A549 (cell line): ENCODE measurements at regions of chr14 and their contacts with region 1.

Region 1: GRCh38 chr14:104852280-104852663 is 12.8 kb upstream of the CEP170B start:
- DNase-seq: no peak
- ATAC-seq: peak in 1 of 2 experiments; percentile 25; a peak in 3 of 6 replicates
- H3K4me3 ChIP-seq: no peak overlapping the region
- H3K27ac ChIP-seq: no peak overlapping the region
- H3K4me1 ChIP-seq: no peaks in the 10 kb centered on the region
- CTCF ChIP-seq: no peak
- EP300 ChIP-seq: no peak
- POLR2A ChIP-seq: no peak
- RAD21 ChIP-seq: no peak

Region 2: DNA sequence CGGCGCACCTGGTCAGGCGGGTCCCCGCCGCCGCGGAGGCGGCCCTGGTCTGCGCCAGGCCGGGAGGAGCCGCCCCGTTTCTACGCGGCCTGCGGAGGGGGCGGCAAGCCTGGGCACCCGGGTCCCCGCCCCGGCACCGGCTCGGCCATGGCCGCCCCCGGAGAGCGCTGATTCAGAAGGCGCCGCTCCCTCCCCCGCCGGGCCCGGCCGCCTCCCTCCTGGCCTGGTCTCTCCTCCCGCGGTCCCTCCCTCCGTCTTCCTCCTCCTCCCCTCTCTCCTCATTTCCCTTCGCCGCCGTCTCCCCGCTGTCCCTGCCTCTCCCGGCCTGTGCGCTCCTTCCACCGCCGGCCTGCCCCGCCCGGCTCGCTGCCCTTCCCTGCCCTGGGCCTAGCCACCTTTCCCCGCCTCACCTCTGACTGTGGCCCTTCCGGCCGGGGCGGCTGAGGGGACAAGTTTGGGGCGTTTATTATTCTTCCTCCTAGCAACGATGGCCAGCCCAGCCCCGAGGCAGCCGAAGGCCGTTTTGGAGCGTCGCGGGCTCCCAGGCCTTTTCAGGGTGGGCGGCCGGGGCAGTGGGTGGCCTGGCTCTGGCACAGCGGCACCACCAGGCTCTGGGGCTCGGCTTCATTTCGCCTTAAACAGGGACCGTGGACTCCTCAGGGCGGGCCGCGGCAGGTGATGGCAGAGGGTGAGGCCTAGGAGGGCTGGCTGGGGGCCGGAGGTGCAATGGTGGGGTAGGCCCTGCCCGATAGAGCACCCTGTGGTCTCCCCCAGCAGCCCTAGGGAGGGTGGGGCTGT is 13.6 kb after region 1 on chr14:
- CTCF ChIA-PET with region 1: interaction called, 10 read pairs
- POLR2A ChIA-PET with region 1: interaction called, 3 read pairs
- DNase-seq: peak; percentile 41 to 58
- ATAC-seq: peak; percentile 61 to 78
- H3K4me3 ChIP-seq: peak overlapping the region; percentile 90
- H3K27ac ChIP-seq: peak overlapping the region; percentile 91 to 99
- H3K4me1 ChIP-seq: peaks cover 15% of the 10 kb centered on the region
- CTCF ChIP-seq: no peak
- EP300 ChIP-seq: no peak
- POLR2A ChIP-seq: peak; percentile 19; the same call in 1 of the 2 replicates
- RAD21 ChIP-seq: no peak